Breast epithelium (tissue), 4 donors: ENCODE measurements at regions of chr9 and their contacts with region 1.

Region 1: DNA sequence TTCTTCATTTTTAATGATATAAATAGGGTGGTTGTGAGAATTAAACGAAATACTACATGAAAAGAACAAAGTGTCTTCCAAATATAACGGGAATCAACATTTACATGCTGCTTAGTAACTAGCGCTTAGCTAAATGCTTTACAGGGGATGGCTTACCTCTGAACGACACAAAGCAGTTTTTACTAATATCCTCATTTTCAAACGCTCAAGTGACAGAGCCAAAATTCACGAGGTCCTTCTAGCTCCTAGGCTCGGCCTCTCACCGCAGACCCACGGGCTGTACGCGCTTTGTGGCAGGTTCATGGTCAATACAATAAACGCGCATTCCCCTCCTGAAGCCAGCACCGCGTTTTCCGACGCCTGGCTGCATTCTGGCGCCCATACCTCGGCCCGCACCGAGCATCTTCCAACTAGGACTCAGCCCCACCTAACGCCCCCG is 442 bp downstream of the ZNF510 start:
- DNase-seq: no peak
- H3K4me3 ChIP-seq: peak overlapping the region; percentile 64 to 95 (median 76)
- H3K27ac ChIP-seq: peak overlapping the region; percentile 80 to 90
- H3K4me1 ChIP-seq: peaks cover 3 to 6% of the 10 kb centered on the region in 2 donors
- H3K27me3 ChIP-seq: no peaks in the 10 kb centered on the region
- CTCF ChIP-seq: no peak
- POLR2A ChIP-seq: no peak

Region 2: GRCh38 chr9:96408409-96409280 is 368.8 kb before region 1 on chr9:
- intact Hi-C with region 1: loop called (anchors 5 kb)
- DNase-seq: no peak
- H3K4me3 ChIP-seq: no peak overlapping the region
- H3K27ac ChIP-seq: no peak overlapping the region
- H3K4me1 ChIP-seq: no peaks in the 10 kb centered on the region
- H3K27me3 ChIP-seq: no peaks in the 10 kb centered on the region
- CTCF ChIP-seq: no peak
- POLR2A ChIP-seq: no peak

Region 3: DNA sequence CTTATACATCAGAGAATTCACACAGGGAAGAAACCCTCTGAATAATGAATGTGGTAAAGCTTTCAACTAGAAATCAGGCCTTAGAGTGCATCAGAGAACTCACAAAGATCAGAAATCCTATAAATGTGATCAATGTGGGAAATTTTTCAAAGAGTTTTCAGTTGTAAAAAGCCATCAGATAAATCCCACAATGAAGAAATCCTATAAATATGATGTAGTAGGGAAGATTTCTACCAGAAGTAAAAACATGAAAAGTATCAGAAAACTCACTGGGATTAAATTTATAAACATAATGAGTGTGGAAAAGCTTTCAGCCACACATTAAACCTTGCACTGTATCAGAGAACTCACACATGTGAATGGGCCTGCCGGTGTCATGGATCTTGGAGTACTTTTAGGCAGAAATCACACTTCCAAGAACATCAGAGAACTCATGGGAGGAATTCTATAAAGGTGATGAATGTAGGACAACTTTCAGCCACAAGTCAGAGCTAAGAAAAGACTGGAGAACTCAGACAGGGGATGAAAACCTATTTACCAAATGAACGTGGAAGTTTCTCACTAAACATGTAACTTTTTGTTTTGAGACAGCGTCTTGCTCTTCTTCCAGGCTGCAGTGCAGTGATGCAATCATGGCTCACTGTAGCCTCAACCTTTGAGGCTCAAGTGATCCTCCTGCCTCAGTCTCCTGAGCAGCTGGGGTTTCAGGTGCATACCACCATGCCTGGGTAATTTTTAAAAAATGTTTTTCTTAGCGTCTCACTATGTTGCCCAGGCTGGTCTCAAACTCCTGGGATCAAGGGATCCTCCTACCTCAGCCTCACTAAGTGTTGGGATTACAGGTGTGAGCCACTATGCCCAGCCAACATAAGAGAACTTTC is 39.1 kb before region 1 on chr9:
- intact Hi-C with region 1: no loop called
- DNase-seq: no peak
- H3K4me3 ChIP-seq: peak overlapping the region in 1 of 3 donors; percentile 9
- H3K27ac ChIP-seq: no peak overlapping the region
- H3K4me1 ChIP-seq: no peaks in the 10 kb centered on the region
- H3K27me3 ChIP-seq: no peaks in the 10 kb centered on the region
- CTCF ChIP-seq: no peak
- POLR2A ChIP-seq: no peak